Natural killer cell (primary cell): ENCODE measurements at regions of chr6 and their contacts with region 1.

Region 1: GRCh38 chr6:4606821-4607704 is 169.1 kb upstream of the CDYL start:
- DNase-seq: peak in 1 of 2 donors; percentile 19
- ATAC-seq: peak; percentile 34 to 69 (median 51)
- H3K4me3 ChIP-seq: peak overlapping the region; percentile 15
- H3K4me3 Mint-ChIP-seq: peak overlapping the region; percentile 81
- H3K27ac ChIP-seq: peak overlapping the region; percentile 45
- H3K27ac Mint-ChIP-seq: peak overlapping the region; percentile 77 to 84
- H3K4me1 ChIP-seq: peaks cover 49% of the 10 kb centered on the region
- H3K4me1 Mint-ChIP-seq: peaks cover 64 to 69% of the 10 kb centered on the region in 2 donors
- H3K27me3 ChIP-seq: no peaks in the 10 kb centered on the region
- H3K27me3 Mint-ChIP-seq: no peaks in the 10 kb centered on the region
- CTCF ChIP-seq: no peak

Region 2: DNA sequence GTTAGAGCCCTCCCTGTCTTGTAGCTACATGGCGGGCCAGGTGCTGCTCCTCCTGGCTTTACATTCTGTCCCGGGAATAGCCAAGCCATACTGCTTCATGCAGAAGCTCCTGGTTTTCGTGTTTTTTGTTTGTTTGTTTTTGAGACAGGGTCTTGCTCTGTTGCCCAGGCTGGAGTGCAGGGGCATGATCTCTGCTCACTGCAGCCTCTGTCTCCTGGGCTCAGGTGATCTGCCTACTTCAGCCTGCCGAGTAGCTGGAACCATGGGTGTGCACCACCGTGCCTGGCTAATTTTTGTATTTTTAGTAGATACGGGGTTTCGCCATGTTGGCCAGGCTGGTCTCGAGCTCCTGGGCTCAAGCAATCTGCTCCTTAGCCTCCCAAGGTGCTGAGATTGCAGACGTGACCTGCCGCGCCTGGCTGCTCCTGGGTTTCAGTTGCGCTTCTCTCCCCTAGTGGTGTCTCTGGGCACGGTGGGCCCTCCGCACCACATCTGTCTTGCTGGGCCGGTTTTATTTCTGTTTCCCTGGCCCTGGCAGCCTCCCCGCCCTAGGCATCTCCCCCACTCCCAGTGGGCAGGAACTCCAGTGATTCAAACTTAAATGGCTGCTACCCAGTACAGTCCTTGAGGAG is 182.0 kb after region 1 on chr6:
- intact Hi-C with region 1: loop called (anchors 5 kb)
- DNase-seq: no peak
- ATAC-seq: no peak
- H3K4me3 ChIP-seq: no peak overlapping the region
- H3K4me3 Mint-ChIP-seq: peak overlapping the region; percentile 89
- H3K27ac ChIP-seq: no peak overlapping the region
- H3K27ac Mint-ChIP-seq: peak overlapping the region; percentile 89 to 90
- H3K4me1 ChIP-seq: peaks cover 31% of the 10 kb centered on the region
- H3K4me1 Mint-ChIP-seq: peaks cover 58 to 60% of the 10 kb centered on the region in 2 donors
- H3K27me3 ChIP-seq: no peaks in the 10 kb centered on the region
- H3K27me3 Mint-ChIP-seq: no peaks in the 10 kb centered on the region
- CTCF ChIP-seq: no peak

Region 3: DNA sequence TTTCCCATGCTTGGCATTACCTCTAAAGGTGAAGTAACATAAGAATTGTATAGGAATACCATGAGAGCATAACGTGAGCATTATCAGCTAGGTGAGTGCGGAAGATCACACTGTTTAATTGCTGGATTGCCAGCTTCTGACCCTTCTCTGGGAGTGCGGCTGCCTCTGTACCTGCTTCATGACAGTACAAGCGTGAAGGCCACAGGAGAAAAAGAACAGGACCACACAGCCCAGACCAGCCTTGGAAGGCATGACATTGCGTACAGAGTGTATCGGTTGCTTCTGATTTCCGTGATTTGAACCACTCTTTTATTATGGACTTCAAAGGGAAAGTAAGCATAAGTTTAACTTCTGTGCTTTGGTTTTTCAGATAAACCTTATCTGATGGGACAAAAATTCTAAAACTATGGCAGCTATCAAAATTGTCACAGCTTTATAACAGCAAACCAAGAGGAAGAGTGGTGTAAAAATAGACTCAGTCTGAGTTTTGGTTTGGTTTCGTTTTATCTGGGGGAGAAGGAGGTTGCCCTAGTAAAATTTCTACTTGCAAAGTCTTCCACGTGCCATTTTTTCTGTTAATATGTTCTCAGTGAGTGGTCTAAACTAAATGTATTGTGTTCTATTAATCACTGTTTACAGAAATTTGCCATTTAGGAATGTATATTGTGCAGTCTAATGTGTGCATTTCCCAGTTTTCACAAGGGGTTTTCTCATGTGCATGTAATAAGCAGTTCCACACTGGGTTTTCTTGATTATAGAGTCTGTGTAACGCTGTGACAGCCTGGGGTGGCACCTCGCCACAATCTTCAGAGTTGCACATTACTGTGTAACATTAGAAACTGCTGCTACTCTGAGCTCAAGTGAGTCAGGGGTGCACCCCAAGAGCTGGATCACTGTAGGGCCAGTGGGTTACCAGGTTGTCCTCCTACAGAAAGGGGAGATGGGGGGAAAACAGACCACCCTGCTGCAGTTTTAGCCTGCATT is 299.5 kb after region 1 on chr6:
- intact Hi-C with region 1: loop called (anchors 10 kb)
- DNase-seq: peak in 1 of 2 donors; percentile 26
- ATAC-seq: peak; percentile 77 to 86 (median 81)
- H3K4me3 ChIP-seq: peak overlapping the region; percentile 13
- H3K4me3 Mint-ChIP-seq: peak overlapping the region; percentile 87
- H3K27ac ChIP-seq: peak overlapping the region; percentile 61
- H3K27ac Mint-ChIP-seq: peak overlapping the region; percentile 82 to 90
- H3K4me1 ChIP-seq: peaks cover 20% of the 10 kb centered on the region
- H3K4me1 Mint-ChIP-seq: peaks cover 45 to 58% of the 10 kb centered on the region in 2 donors
- H3K27me3 ChIP-seq: no peaks in the 10 kb centered on the region
- H3K27me3 Mint-ChIP-seq: no peaks in the 10 kb centered on the region
- CTCF ChIP-seq: no peak

Region 4: DNA sequence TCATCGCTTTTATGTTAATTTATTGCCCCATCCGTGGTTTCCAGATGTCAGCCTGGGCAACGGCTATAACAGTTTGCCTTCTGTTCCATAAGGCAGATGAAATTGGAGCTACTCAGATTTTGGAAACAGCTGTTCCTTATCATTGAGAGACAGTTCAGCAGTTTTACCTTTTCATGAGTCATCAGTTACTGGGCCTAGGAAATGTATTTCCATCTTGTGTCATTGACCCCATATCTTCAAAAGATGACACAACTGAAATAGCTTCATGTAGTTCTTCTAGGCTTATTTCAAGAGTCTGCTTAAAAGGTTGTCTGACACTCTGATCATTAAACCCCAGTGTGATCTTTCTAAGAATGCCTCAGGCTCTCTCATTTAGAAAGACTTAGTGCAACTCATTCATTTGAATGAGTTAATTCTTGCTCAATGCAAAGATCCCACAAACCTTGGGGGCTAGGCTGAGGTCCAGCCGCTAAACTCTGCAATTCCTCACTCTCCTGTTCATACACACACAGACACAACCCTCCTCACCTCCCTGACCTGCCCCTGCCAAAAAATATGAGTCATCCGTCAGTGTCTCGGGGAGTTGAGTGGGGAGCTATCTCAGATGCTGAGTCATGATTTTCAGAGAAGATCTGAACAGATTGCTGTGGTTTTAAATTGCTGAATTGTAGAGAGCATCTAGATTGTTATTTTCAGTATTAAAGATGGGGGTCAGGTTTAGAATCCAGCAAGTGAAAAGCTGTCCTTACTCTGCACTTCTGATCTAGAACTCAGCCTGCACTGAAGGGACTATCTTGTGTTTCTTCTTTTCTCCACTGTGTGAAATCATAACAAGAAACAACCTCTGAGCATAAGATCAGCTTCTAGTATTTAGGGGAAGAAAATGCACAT is 335.0 kb after region 1 on chr6:
- intact Hi-C with region 1: loop called (anchors 2 kb)
- DNase-seq: peak; percentile 28 to 31
- ATAC-seq: peak; percentile 82 to 89 (median 83)
- H3K4me3 ChIP-seq: no peak overlapping the region
- H3K4me3 Mint-ChIP-seq: peak overlapping the region; percentile 33
- H3K27ac ChIP-seq: peak overlapping the region; percentile 22
- H3K27ac Mint-ChIP-seq: peak overlapping the region; percentile 82 to 88
- H3K4me1 ChIP-seq: peaks cover 12% of the 10 kb centered on the region
- H3K4me1 Mint-ChIP-seq: peaks cover 34 to 43% of the 10 kb centered on the region in 2 donors
- H3K27me3 ChIP-seq: no peaks in the 10 kb centered on the region
- H3K27me3 Mint-ChIP-seq: no peaks in the 10 kb centered on the region
- CTCF ChIP-seq: no peak